HEK293T (cell line): ENCODE measurements at regions of chr5 and their contacts with region 1.

Region 1: DNA sequence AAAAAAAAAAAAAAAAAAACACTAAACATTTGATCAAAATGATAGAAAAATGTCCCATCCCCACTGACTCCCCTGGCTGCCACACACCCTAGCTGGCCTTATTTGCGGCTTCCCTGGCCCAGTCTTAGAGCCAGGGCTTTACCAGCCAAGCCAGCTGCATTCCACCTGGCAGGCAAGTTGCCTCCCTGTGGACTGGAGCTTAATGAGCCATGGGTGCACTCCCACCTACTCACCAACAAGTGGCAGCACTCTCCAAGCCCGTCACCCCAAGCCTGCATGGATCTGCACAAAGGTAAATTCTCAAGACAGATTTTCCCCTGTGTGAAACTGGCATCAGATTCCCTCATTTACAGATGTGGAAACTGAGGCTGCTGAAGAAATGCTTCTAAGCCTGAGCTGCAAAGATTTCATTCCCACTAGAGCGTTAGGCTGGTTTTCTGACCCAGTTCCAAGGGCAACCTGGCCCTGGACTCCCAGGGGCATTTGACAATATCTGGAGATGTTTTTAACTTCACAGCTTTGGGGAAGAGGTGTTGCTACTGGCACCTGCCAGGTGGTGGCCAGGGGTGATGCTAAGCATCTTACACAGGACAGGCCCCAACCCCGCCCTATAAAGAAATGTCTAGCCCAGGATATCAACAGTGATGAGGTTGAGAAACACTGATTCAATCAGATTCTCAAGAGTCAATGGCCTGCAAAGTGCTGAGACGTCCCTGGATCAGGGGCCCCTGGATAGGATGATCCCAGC is 21.9 kb upstream of the VDAC1 start:
- DNase-seq: peak; percentile 81

Region 2: GRCh38 chr5:134004592-134005375 is 21.9 kb before region 1 on chr5 and contains the start of gene VDAC1:
- CTCF ChIA-PET with region 1: interaction called, 13 read pairs
- POLR2A ChIA-PET with region 1: interaction called, 6 read pairs
- DNase-seq: peak; percentile 92